Endothelial cell of umbilical vein (primary cell): ENCODE measurements at regions of chr11 and their contacts with region 1.

Region 1: GRCh38 chr11:8006349-8006977 is 19.3 kb downstream of the EIF3F start:
- DNase-seq: peak; percentile 61
- H3K4me3 ChIP-seq: no peak overlapping the region
- H3K27ac ChIP-seq: no peak overlapping the region
- H3K4me1 ChIP-seq: no peaks in the 10 kb centered on the region
- H3K27me3 ChIP-seq: peaks cover 0 to 2% of the 10 kb centered on the region in 2 experiments
- CTCF ChIP-seq: peak; percentile 83
- POLR2A ChIP-seq: no peak

Region 2: GRCh38 chr11:7949934-7950333 is 56.5 kb before region 1 on chr11:
- CTCF ChIA-PET with region 1: no interaction called
- POLR2A ChIA-PET with region 1: no interaction called
- dilution Hi-C with region 1: no loop called
- intact Hi-C with region 1: no loop called
- DNase-seq: no peak
- H3K4me3 ChIP-seq: no peak overlapping the region
- H3K27ac ChIP-seq: no peak overlapping the region
- H3K4me1 ChIP-seq: no peaks in the 10 kb centered on the region
- H3K27me3 ChIP-seq: peaks cover 6 to 16% of the 10 kb centered on the region in 2 experiments
- CTCF ChIP-seq: no peak
- POLR2A ChIP-seq: no peak

Region 3: GRCh38 chr11:8018484-8019313 is 12.2 kb after region 1 on chr11:
- CTCF ChIA-PET with region 1: interaction called, 25 read pairs
- POLR2A ChIA-PET with region 1: no interaction called
- dilution Hi-C with region 1: no loop called
- intact Hi-C with region 1: no loop called
- DNase-seq: peak; percentile 30
- H3K4me3 ChIP-seq: peak overlapping the region; percentile 25 to 39 (median 36)
- H3K27ac ChIP-seq: no peak overlapping the region
- H3K4me1 ChIP-seq: peaks cover 5% of the 10 kb centered on the region
- H3K27me3 ChIP-seq: peaks cover 37 to 43% of the 10 kb centered on the region in 2 experiments
- CTCF ChIP-seq: no peak
- POLR2A ChIP-seq: no peak

Region 4: GRCh38 chr11:8070417-8071115 is 64.1 kb after region 1 on chr11:
- CTCF ChIA-PET with region 1: interaction called, 12 read pairs
- POLR2A ChIA-PET with region 1: no interaction called
- dilution Hi-C with region 1: no loop called
- intact Hi-C with region 1: loop called (anchors 1 kb)
- DNase-seq: peak; percentile 21
- H3K4me3 ChIP-seq: no peak overlapping the region
- H3K27ac ChIP-seq: no peak overlapping the region
- H3K4me1 ChIP-seq: peaks cover 3% of the 10 kb centered on the region
- H3K27me3 ChIP-seq: peaks cover 8 to 10% of the 10 kb centered on the region in 2 experiments
- CTCF ChIP-seq: peak in 1 of 2 donors; percentile 18
- POLR2A ChIP-seq: no peak

Region 5: GRCh38 chr11:8080674-8081590 is 74.5 kb after region 1 on chr11 and contains the start of gene TUB:
- CTCF ChIA-PET with region 1: interaction called, 822 read pairs
- POLR2A ChIA-PET with region 1: no interaction called
- dilution Hi-C with region 1: no loop called
- intact Hi-C with region 1: no loop called
- DNase-seq: no peak
- H3K4me3 ChIP-seq: peak within 1 kb of the TSS in 2 of 3 experiments; percentile 35 to 42
- H3K27ac ChIP-seq: no peak within 1 kb of the TSS
- H3K4me1 ChIP-seq: peaks cover 6% of the 10 kb centered on the region
- H3K27me3 ChIP-seq: peaks cover 2 to 5% of the 10 kb centered on the region in 2 experiments
- CTCF ChIP-seq: no peak
- POLR2A ChIP-seq: no peak
- total RNA-seq, gene TUB: 3.9 and 4.9 TPM in 2 replicates

Region 6: DNA sequence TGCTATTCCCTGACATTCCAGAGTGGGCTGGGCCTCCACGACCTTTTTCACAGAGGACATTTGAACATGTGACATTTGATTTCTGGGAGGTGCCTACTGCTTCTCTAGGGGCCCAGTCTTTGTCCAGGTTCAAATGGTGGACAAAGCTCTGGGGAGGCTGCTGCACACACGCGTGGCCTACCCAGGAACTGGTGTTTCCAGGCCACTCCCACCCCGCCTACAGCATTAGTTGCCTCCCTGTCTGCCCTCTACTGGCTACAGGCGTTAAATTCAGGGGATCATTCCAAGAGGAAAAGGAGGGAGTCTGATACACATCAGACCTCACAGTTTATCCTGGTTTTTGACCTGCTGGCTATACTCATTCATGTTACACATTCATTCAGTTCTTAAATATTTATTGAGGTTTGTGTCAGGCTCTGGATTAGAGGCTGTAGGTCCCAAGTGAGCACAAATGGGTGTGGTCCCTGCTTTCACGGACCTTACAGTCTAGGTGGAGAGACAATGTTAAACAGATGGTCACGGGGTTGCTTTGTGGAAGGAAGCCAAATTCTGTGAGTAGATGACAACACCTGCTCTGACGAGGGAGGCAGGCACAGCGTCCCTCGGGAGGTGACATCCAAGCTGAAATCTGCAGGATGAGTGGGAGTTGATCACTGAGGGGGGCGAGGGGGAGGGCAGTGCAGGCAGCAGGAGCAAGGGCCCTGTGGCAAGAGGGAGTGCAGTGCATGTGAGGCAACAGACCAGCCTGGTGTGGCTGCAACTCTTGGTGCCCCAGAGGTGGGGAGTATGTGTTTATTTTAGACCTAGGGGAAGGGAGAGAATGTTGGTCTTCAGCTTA is 86.3 kb after region 1 on chr11:
- CTCF ChIA-PET with region 1: interaction called, 822 read pairs
- POLR2A ChIA-PET with region 1: no interaction called
- dilution Hi-C with region 1: no loop called
- intact Hi-C with region 1: loop called (anchors 1 kb)
- DNase-seq: peak; percentile 61
- H3K4me3 ChIP-seq: no peak overlapping the region
- H3K27ac ChIP-seq: no peak overlapping the region
- H3K4me1 ChIP-seq: no peaks in the 10 kb centered on the region
- H3K27me3 ChIP-seq: no peaks in the 10 kb centered on the region
- CTCF ChIP-seq: peak; percentile 67 to 68
- POLR2A ChIP-seq: no peak